Sigmoid colon (tissue), 7 donors: ENCODE measurements at regions of chr15 and their contacts with region 1.

Region 1: DNA sequence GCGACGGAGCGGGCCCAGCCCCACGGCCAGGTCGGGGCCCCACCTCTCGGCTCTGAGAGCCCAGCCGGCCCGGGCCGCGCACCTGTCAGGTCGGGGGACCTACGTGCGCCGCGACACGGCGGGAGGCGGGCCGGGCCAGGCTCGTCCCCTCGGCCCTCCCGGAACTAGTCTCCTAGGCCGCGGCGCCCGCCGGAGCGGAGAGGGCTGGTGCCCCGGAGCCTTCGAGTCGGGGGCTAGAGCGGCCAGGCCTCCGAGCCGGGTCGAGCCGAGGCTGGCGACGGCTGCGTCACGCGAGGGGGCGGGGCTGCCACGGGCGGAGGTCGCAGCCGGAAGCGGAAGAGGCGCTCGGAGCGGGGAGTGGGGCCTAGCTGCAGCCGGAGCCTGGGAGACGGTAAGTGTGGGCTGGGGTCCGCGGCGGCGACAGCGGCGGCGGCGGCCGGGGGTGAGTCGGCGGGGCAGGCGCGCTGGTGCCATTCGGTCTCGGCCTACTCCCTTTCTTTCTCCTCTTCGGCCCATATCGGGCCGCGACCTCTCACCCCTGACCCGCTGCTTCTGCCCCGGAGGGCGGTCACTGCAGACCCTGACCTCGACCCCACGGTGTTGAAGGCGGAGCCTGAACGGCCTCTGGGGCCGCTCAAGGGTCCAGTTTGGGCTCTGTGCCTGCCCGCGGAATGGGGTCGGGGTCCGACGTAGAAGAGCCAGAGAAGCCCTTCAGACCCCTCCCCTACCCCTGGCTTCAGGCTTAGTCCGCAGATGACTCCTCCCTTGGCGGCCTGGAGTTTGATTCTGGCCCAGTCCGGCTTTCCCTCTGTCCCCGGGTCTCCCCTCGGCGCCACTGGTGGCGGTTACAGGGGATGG is at the start of gene CLK3:
- DNase-seq: peak; percentile 98
- H3K4me3 ChIP-seq: peak within 1 kb of the TSS; percentile 75 to 100 (median 88)
- H3K27ac ChIP-seq: peak within 1 kb of the TSS; percentile 96 to 100 (median 98)
- H3K4me1 ChIP-seq: peaks cover 0 to 45% (median 34%) of the 10 kb centered on the region in 4 donors
- H3K27me3 ChIP-seq: no peaks in the 10 kb centered on the region
- CTCF ChIP-seq: no peak
- EP300 ChIP-seq: no peak
- POLR2A ChIP-seq: peak; percentile 36 to 43
- total RNA-seq, gene CLK3: 73.1 to 124 (median 115) TPM

Region 2: DNA sequence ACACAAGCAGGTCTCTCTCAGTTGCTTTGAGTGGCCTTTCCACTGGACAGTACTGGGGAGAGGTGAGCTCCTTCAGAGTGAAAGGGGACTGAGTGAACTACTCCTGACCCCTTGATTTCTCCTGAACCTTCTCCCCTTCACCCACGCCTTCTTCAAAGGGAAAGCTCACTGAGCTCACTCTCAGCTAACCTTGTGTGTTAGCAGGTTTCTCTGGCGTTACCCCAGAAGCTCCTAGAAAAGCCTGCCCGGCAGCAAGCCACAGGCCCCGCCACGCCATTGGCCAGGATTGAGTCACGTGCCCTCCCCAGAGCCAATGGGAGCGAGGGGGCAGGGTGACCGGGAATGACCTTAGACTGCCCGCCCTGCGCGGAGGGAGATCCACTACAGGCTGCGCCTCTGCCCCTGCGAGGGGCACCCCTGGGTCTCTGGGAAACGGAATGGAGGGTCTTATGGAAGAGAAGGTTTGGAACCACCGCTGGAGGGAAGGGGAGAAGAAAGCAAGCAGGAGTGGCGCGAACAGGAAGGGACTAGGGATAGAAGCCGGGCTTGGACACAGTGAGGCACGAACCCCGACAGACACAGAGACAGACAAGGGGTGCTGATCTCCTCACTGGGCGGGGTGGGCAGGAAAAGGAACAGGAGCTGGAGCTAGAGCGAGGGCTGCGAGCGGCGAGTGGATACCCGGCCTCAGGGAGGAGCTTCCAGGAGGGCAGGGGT is 17.5 kb before region 1 on chr15:
- intact Hi-C with region 1: loop called (anchors 1 kb)
- DNase-seq: peak; percentile 98
- H3K4me3 ChIP-seq: peak overlapping the region; percentile 47 to 68 (median 60)
- H3K27ac ChIP-seq: peak overlapping the region; percentile 85 to 93 (median 88)
- H3K4me1 ChIP-seq: peaks cover 0 to 24% (median 22%) of the 10 kb centered on the region in 4 donors
- H3K27me3 ChIP-seq: no peaks in the 10 kb centered on the region
- CTCF ChIP-seq: no peak
- EP300 ChIP-seq: no peak
- POLR2A ChIP-seq: peak; percentile 83 to 89